H1 (cell line): ENCODE measurements at regions of chr15 and their contacts with region 1.

Region 1: DNA sequence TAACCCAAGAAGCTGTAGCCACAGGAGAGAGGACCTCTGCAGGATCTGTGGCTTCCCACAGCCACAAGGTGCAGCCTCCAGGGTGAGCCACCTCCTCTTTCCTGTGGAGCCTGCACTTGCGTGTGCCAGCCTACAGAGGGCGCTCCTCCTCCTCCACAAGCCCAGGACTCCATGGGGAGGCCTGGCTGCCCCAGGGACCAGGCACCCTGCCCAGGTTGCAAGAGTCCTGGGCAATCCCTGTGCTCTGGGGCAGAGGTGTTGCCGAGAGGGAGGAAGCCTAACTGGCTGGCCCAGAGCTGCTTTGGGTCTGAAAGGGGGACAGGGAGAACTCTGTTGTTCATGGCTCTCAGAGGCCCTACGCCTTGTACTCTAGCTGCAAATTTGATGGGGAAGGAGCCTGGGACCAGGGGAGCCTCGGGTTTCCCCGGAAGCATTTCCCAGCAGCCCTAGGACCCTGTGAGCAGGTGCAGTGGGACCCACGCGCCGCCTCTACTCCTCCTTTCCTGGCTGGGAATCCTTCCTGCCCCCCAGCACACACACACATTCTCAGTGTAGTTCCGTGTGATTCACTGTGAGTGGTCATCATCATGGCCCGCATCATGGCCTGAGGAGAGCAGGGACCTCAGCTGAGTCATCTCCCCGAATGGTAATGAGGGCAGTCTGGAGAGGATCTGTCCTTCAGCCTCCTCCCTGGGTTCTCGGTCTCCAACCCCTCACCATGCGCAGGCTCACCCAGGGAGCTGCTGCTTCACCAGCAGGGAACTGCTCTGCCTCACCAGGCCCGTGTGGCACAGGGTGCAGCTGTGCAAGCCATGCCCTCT is 24.3 kb downstream of the TBC1D21 start:
- DNase-seq: peak; percentile 44 to 85
- H3K4me3 ChIP-seq: no peak overlapping the region
- H3K27ac ChIP-seq: no peak overlapping the region
- H3K4me1 ChIP-seq: peaks cover 0 to 3% (median 1%) of the 10 kb centered on the region in 4 experiments; a peak in 3 of 7 replicates
- H3K27me3 ChIP-seq: no peaks in the 10 kb centered on the region
- CTCF ChIP-seq: peak; percentile 99 to 100 (median 100)
- EP300 ChIP-seq: no peak
- POLR2A ChIP-seq: no peak
- RAD21 ChIP-seq: peak; percentile 88 to 90

Region 2: DNA sequence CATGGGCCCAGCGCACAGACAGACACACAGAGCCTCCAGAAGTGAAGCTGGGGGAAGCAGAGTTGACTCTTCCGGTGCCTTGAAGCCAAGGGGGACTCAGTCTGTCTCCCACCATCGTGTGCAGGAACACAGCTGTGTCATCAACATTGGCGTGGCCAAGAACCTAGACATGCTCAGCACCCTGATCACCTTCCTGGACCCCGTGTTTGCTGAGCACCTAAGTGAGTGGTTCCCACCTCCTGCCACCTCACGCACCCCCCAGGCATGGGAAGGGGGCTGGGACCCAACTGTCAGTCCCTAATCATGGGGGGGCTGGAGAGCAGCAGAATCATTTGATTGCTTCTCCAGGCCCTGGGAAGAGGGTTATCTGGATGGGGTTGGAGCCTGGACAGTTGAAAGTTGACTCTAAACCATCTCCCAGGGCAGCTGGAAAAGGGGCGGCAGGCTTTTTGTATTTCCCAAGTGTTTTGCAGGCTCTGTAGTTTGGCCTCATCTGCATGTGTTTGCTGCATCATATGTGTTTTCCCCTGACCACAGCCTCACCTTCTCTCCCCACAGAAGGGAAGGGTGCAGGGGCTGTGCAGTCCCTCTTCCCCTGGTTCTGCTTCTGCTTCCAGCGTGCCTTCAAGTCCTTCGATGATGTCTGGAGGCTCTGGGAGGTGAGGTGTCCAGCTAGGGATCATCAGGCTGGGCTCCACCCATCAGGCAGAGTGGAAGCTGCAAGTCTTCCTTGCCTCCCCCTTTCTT is 11.5 kb before region 1 on chr15:
- CTCF ChIA-PET with region 1: interaction called, 31 read pairs
- POLR2A ChIA-PET with region 1: interaction called, 3 read pairs
- DNase-seq: no peak
- H3K4me3 ChIP-seq: no peak overlapping the region
- H3K27ac ChIP-seq: no peak overlapping the region
- H3K4me1 ChIP-seq: no peaks in the 10 kb centered on the region; a peak in 1 of 7 replicates
- H3K27me3 ChIP-seq: no peaks in the 10 kb centered on the region; a peak in 1 of 7 replicates
- CTCF ChIP-seq: no peak
- EP300 ChIP-seq: no peak
- POLR2A ChIP-seq: no peak
- RAD21 ChIP-seq: no peak

Region 3: DNA sequence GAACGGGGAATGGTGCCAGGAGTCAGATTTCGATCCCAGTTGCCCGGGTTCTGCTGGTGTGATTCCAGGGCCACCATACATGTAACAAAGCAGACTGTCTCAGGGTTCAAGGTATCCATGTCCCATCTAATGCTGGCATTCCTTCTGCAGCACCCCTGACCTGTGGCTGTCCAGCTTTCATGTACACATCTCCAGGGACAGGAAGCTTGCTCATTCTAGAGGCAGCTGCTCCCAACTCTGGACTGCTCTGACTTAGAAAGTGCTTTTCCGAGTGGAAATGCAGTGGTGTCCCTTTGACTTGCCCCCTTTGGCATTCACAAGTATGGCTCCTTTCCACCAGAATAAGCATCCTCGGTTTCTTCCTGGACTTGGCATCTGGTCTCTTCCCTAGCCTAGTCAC is 127.8 kb after region 1 on chr15:
- CTCF ChIA-PET with region 1: no interaction called
- POLR2A ChIA-PET with region 1: no interaction called
- DNase-seq: no peak
- H3K4me3 ChIP-seq: no peak overlapping the region
- H3K27ac ChIP-seq: 0 out of 2 replicates have a peak overlapping the region, but pooled peaks have one; percentile 38
- H3K4me1 ChIP-seq: no peaks in the 10 kb centered on the region
- H3K27me3 ChIP-seq: no peaks in the 10 kb centered on the region
- CTCF ChIP-seq: no peak
- EP300 ChIP-seq: no peak
- POLR2A ChIP-seq: no peak
- RAD21 ChIP-seq: no peak